Activated CD4-positive, alpha-beta T cell treated with anti-CD3 and anti-CD28 coated beads, Interleukin-2, amount 10 ng/mL, durations not matched to agents 24 days and 14 days (primary cell): ENCODE measurements at regions of chr6 and their contacts with region 1.

Region 1: DNA sequence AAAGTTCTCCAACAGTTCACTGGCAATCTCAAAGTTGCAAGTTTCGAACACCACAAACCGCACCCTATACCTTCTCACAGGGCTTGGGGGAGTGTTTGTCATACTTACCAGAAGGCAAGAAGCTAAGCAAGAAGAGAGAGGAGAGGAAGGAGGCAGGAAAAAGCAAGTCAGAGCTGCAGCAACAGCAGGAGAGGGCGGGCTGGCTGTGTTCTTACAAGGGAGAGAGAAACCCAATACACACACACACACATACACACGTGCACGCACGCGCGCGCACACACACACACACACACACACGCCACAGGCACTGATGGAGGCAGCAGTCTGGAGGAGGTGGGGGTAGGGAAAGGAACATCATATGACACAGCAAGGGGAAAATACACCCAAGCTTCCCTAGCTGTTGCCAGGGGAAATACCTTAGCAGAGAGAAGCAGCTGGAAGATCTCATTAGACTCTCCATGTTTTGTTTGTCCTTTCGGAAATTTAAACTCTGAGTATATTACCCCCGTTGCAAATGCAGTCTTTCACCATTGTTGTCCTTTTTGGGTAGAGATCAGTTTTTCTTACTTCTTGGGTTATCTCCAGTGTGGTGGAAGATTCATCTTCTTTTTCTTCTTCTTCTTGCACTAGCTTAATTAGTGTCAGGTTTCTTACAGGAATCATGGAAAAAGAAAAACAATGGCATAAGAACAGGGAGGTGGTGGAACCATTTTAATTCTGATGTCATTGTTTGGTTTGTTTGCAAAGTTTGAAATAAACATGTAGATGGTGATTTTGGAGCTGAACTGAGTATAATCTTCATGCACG is at the start of gene TXLNB:
- DNase-seq: peak; percentile 95
- H3K4me3 Mint-ChIP-seq: peak within 1 kb of the TSS; percentile 84
- H3K27ac Mint-ChIP-seq: peak within 1 kb of the TSS; percentile 99
- H3K4me1 Mint-ChIP-seq: peaks cover 47% of the 10 kb centered on the region
- H3K27me3 Mint-ChIP-seq: no peaks in the 10 kb centered on the region
- total RNA-seq, gene TXLNB: 0.09 TPM in 1 of 2 replicates, not detected in the other

Region 2: DNA sequence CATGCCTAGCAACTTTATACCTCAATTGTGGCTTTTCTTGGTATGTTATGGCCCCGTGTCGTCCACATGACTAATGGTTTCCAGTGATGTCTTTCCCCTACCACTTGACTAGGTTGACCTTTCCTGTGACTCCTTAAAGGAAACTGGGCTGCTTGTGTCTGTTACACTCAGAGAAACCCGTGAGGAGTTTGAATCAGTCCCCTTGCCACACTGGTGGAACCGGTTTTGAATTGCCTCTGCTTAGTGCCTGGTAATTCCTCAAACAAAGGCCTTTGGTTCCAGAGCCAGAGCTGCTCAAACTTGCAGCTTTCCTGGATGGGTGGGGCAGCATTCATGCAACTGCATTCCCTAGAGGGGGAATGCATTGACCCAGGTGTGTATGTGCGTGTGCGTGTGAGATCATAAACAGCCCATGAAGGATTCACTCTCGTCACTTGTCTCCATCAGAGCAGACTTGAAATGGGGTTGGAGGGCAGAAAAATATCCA is 474.2 kb before region 1 on chr6:
- intact Hi-C with region 1: loop called (anchors 2 kb)
- DNase-seq: no peak
- H3K4me3 Mint-ChIP-seq: peak overlapping the region; percentile 45
- H3K27ac Mint-ChIP-seq: peak overlapping the region; percentile 79
- H3K4me1 Mint-ChIP-seq: peaks cover 29% of the 10 kb centered on the region
- H3K27me3 Mint-ChIP-seq: peaks cover 2% of the 10 kb centered on the region

Region 3: DNA sequence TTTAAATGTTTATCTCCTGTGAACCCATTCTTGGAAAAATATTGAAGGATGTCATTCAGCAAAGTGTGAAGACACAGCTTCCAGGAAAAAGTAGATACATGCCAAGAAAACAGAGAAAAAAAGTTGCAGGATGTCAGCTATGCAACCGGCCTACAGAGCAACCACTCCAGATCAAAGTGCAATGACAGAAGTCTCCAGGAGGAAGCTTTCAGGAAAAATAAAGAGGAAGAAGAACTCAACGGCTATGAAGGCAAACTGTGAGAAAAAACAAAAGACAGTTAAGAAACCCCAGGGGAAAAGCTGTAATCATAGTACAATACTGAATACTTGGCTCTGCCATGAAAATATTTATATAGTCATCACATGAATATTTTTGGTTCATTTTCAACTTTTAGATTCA is 334.5 kb before region 1 on chr6:
- intact Hi-C with region 1: no loop called
- DNase-seq: no peak
- H3K4me3 Mint-ChIP-seq: no peak overlapping the region
- H3K27ac Mint-ChIP-seq: peak overlapping the region; percentile 59
- H3K4me1 Mint-ChIP-seq: peaks cover 41% of the 10 kb centered on the region
- H3K27me3 Mint-ChIP-seq: no peaks in the 10 kb centered on the region

Region 4: GRCh38 chr6:139068846-139069245 is 223.2 kb before region 1 on chr6:
- intact Hi-C with region 1: no loop called
- DNase-seq: no peak
- H3K4me3 Mint-ChIP-seq: no peak overlapping the region
- H3K27ac Mint-ChIP-seq: no peak overlapping the region
- H3K4me1 Mint-ChIP-seq: no peaks in the 10 kb centered on the region
- H3K27me3 Mint-ChIP-seq: no peaks in the 10 kb centered on the region

Region 5: GRCh38 chr6:139153855-139154254 is 138.2 kb before region 1 on chr6:
- intact Hi-C with region 1: loop called (anchors 2 kb)
- DNase-seq: no peak
- H3K4me3 Mint-ChIP-seq: peak overlapping the region; percentile 61
- H3K27ac Mint-ChIP-seq: peak overlapping the region; percentile 83
- H3K4me1 Mint-ChIP-seq: peaks cover 64% of the 10 kb centered on the region
- H3K27me3 Mint-ChIP-seq: no peaks in the 10 kb centered on the region

Region 6: GRCh38 chr6:139249395-139249794 is 42.6 kb before region 1 on chr6:
- intact Hi-C with region 1: loop called (anchors 1 kb)
- DNase-seq: peak; percentile 70
- H3K4me3 Mint-ChIP-seq: peak overlapping the region; percentile 52
- H3K27ac Mint-ChIP-seq: peak overlapping the region; percentile 91
- H3K4me1 Mint-ChIP-seq: peaks cover 46% of the 10 kb centered on the region
- H3K27me3 Mint-ChIP-seq: no peaks in the 10 kb centered on the region

Region 7: DNA sequence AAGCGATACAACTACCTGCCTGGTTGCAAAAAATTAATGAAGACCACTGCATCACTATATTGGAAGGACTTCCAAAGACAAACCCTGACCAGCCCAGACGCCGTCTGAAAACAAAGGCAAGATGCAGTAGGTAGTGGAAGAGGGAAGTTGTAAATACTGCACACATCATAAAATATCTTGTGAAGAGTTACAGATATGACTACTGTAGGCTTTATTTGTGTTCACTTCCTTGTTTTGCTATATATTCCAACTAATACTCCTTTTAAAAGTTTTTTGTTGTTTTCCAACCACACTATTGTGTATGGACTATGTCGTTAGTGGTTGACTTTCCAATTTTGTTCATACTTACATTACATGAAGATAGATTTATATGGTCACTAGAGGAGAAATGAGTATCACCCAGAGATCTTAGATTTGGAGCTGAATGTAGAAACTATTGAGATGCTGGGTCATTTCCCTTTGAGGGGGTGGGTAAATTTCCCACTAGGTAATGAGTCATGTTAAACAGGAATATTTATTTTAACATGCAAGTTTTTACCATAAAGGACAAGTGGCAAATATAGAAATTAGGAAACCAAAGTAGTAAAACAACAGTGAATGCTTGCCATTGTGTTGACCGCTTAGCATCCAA is 16.4 kb after region 1 on chr6:
- intact Hi-C with region 1: loop called (anchors 1 kb)
- DNase-seq: peak; percentile 8
- H3K4me3 Mint-ChIP-seq: no peak overlapping the region
- H3K27ac Mint-ChIP-seq: peak overlapping the region; percentile 82
- H3K4me1 Mint-ChIP-seq: peaks cover 23% of the 10 kb centered on the region
- H3K27me3 Mint-ChIP-seq: no peaks in the 10 kb centered on the region

Region 8: DNA sequence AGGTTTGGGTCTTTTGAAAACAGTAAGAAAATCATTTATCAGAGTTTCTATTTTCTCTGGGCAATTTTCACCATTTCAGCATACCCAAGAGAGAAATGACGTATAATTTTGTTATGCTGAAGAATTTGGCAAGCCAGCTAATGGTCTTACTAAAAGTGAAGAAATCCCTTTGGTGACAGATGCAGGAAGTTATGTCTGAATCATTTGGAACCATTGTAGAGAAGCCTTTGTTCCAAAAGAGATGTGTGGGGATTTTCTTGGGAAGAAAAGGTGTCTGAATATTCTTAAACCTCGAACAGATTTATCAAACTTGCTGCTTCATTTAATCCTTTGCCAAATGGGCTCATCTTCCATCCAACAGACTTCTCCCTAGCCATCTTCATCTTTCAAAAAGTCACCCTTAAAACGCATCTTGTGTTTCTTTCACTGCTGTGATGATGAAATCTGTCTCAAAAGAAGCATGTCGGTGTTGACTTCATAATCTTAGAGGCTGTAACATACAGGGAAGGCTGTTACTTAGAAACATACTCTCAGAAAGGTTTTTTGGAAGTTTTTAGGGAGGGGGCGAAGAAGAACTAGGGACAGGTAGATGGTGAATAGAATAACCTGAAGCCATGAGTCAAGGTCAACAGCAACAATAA is 42.9 kb after region 1 on chr6:
- intact Hi-C with region 1: no loop called
- DNase-seq: no peak
- H3K4me3 Mint-ChIP-seq: no peak overlapping the region
- H3K27ac Mint-ChIP-seq: no peak overlapping the region
- H3K4me1 Mint-ChIP-seq: no peaks in the 10 kb centered on the region
- H3K27me3 Mint-ChIP-seq: no peaks in the 10 kb centered on the region

Region 9: DNA sequence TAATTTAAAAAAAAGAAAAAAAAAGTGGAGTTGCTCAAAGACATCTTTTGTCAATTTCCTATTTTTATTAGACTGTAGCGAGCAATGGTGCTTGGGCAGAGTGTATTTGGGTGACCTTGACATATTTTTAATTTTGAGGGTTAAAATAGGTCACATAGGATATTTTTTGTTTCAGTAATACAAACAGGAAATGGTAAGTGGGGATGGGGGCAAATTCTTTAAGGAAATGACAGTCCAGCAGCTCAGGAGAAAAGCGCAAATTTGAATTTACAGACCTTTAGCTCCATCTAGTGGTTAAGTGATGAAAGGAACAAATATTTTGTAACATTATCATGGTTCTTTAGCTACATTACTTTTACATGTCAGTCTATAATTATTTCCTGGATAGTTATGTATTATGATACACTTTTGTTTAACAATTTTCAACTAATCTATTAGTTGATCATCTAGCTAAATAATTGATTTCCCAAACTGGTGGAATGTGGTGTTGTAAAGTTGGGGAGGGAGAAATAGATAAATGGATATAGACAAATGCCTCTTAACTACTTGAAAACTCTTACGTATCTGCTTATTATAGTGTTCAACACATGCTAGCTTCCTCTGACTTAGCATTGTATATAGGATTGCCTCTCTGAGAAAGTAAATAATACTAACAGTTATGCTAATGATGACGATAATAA is 72.4 kb after region 1 on chr6:
- intact Hi-C with region 1: loop called (anchors 2 kb)
- DNase-seq: peak; percentile 68
- H3K4me3 Mint-ChIP-seq: no peak overlapping the region
- H3K27ac Mint-ChIP-seq: no peak overlapping the region
- H3K4me1 Mint-ChIP-seq: peaks cover 30% of the 10 kb centered on the region
- H3K27me3 Mint-ChIP-seq: peaks cover 4% of the 10 kb centered on the region